ENCODE measurements at regions of chr3 and their contacts with region 1.

Region 1: DNA sequence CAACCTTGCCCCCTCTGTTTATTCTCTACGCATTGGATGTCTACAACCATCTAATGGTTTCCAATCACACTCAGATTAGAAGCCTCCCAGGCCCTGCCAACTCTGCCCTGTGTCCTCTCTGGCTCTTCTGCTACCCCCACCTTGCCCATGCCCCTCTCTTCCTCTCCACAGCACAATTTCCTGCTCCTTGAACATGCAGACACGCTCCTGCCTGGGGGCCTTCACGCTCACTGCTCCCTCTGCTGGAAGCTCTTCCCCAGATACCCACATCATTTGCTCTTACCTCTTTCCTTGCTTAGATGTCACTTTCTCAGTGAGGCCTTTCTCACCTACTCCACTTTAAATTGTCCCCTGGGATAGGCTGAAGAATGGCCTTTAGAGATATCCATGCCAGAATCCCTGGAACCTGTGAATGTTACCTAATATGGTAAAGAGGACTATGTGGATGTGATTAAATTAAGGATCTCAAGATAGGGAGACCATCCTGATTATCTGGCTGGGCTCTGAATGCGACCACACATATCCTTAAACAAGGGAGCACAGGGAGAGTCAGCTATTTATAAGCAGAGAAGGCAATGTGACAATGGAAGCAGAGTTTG is 9.9 kb downstream of the KY start:
- DNase-seq: peak; percentile 57
- ATAC-seq: peak; percentile 75
- H3K4me3 Mint-ChIP-seq: no peak overlapping the region
- H3K27ac Mint-ChIP-seq: no peak overlapping the region
- H3K4me1 Mint-ChIP-seq: peaks cover 37% of the 10 kb centered on the region
- H3K27me3 Mint-ChIP-seq: peaks cover 31% of the 10 kb centered on the region
- CTCF ChIP-seq: peak; percentile 35; the same call in 1 of the 2 replicates

Region 2: DNA sequence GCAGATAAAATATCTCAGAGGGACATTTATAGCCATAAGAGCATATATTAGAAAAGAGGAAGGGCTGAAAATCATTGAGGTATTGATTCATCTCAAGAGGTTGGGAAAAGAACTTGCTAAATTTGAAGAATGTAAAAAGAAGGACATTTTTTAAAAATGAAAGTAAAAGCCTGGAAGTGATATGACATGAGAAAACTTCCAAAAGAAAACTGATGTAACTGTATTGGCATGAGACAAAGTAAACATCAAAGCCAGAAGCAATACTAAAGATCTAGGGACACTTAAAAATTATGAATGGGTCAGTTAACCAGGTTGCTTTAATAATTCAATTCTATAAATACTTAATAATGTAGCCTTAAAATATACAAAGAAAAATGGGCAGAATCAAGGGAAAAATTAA is 123.2 kb before region 1 on chr3:
- CTCF ChIA-PET with region 1: no interaction called
- POLR2A ChIA-PET with region 1: no interaction called
- DNase-seq: no peak
- ATAC-seq: no peak
- H3K4me3 Mint-ChIP-seq: no peak overlapping the region
- H3K27ac Mint-ChIP-seq: no peak overlapping the region
- H3K4me1 Mint-ChIP-seq: 0 out of 2 replicates have a peak, but pooled peaks cover 3% of the 10 kb centered on the region
- H3K27me3 Mint-ChIP-seq: no peaks in the 10 kb centered on the region
- CTCF ChIP-seq: no peak

Region 3: DNA sequence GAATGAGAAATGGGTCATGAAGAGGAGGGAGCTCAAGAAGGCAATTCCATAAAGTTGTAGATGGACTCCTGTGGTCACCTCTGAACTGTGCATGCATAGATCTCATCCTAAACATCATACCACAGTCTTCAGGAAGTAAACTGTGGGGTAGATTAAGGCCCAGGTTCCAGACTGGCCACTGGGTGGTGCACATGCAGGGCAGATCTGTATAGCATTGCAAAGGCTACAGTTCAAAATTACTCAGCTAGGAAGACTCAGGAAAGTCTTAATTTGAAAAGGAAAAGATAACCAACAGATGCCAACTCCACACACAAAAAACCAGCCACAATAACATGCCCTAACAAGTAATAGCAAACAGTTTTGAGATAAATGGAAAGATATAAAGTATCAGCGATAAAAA is 10.5 kb before region 1 on chr3:
- CTCF ChIA-PET with region 1: interaction called, 29 read pairs
- POLR2A ChIA-PET with region 1: no interaction called
- DNase-seq: no peak
- ATAC-seq: peak; percentile 85
- H3K4me3 Mint-ChIP-seq: no peak overlapping the region
- H3K27ac Mint-ChIP-seq: no peak overlapping the region
- H3K4me1 Mint-ChIP-seq: peaks cover 6% of the 10 kb centered on the region; the same call in 1 of the 2 replicates
- H3K27me3 Mint-ChIP-seq: no peaks in the 10 kb centered on the region; the same call in 1 of the 2 replicates
- CTCF ChIP-seq: no peak

Region 4: DNA sequence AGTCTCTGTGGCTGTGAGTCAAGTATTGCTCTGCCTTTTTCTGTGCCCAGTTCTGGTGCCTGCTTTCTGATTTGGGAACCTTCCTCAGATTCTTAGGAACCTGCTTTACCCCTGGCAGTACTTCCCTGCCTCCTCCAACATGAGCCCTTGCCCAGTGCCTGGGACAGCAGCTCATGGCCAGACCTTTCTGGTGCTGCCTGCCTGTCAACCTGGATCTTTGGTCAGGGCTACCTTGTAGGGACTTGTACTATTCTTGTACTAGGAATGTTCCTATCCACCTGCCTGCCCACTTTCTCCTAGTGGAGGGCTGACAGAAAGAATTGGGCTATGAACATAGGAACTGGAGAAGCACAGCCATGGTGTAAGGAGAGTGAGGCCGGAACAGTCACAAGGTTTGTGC is 125.3 kb after region 1 on chr3:
- CTCF ChIA-PET with region 1: no interaction called
- POLR2A ChIA-PET with region 1: no interaction called
- DNase-seq: no peak
- ATAC-seq: no peak
- H3K4me3 Mint-ChIP-seq: no peak overlapping the region
- H3K27ac Mint-ChIP-seq: no peak overlapping the region
- H3K4me1 Mint-ChIP-seq: no peaks in the 10 kb centered on the region
- H3K27me3 Mint-ChIP-seq: no peaks in the 10 kb centered on the region
- CTCF ChIP-seq: no peak

Region 5: GRCh38 chr3:134794950-134795745 is 154.2 kb after region 1 on chr3 and contains the start of gene EPHB1:
- CTCF ChIA-PET with region 1: no interaction called
- POLR2A ChIA-PET with region 1: no interaction called
- DNase-seq: peak; percentile 93
- ATAC-seq: peak; percentile 91
- H3K4me3 Mint-ChIP-seq: peak within 1 kb of the TSS; percentile 96
- H3K27ac Mint-ChIP-seq: peak within 1 kb of the TSS; percentile 96
- H3K4me1 Mint-ChIP-seq: peaks cover 13% of the 10 kb centered on the region
- H3K27me3 Mint-ChIP-seq: peaks cover 70% of the 10 kb centered on the region
- CTCF ChIP-seq: peak; percentile 84
- total RNA-seq, gene EPHB1: 7.0 to 9.9 TPM (median 8.2 TPM) in 3 replicates